ENCODE measurements at regions of chr14 and their contacts with region 1.

Region 1: DNA sequence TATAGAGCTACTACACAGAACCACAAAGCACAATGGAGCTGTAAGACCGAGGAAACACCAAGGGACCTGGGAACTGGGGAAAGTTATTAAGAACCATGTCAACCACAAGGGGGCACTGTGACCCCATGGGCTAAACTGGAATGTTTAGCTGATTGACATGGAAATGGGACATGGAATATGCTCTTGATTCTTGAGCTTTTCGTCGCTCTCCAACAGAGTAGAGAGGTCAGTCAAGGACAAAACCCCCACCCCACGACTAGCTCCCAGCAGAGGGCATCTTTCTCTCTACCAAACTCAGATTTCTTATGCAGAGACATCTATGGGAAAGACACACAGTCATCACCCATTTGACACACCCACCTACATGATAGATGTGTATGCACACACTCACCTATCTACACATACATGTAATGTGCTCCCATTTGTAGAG is 10.1 kb downstream of the NDRG2 start:
- DNase-seq: peak; percentile 23
- H3K4me3 ChIP-seq: no peak overlapping the region
- CTCF ChIP-seq: peak; percentile 82

Region 2: GRCh38 chr14:21024585-21025370 is 10.0 kb after region 1 on chr14 and contains the start of gene NDRG2:
- CTCF ChIA-PET with region 1: interaction called, 172 read pairs
- POLR2A ChIA-PET with region 1: interaction called, 3 read pairs
- DNase-seq: no peak
- H3K4me3 ChIP-seq: peak within 1 kb of the TSS; percentile 43
- CTCF ChIP-seq: no peak

Region 3: GRCh38 chr14:21049271-21049673 is 34.5 kb after region 1 on chr14:
- CTCF ChIA-PET with region 1: interaction called, 287 read pairs
- POLR2A ChIA-PET with region 1: no interaction called
- DNase-seq: no peak
- H3K4me3 ChIP-seq: no peak overlapping the region
- CTCF ChIP-seq: no peak

Region 4: DNA sequence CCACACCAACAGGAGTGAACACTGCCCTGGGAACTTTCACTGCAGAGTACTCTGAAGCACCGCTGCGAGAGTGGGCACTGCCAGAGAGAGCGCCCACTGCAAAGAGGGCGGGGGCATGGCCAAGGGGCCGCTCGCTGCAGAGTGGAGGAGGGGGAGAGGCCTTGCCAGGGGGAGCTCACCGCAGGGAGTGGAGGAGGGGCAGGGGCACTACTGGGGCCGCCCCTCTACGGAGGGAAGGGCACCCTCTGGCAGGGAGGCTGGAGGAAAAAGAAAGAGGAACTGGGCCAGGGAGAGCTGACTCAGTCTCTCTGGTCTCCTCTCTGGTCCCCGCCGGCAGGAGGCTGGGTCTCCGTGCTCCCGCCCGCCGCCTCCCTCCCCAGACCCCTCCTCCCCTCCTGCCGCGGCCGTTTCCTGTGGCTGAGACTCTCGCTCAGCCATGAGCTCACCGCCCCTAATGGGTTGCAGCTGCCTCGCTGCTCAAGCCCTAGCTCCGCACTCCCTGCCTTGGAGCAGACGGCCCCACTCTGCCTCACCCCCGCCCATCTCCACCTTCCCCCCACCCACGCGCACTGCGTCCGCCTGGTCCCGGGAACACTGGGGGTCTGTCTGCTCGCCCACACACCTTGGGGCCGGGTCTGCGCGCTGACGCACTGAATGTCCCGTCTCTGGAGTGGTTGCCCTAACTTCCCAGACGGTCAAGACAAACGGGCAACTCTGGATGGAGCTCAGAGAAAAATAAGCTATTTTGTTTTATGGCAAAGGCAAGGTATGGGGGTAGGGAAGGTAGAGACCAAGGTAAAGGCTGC is 56.7 kb after region 1 on chr14:
- CTCF ChIA-PET with region 1: interaction called, 137 read pairs
- POLR2A ChIA-PET with region 1: interaction called, 8 read pairs
- DNase-seq: no peak
- H3K4me3 ChIP-seq: peak overlapping the region; percentile 81
- CTCF ChIP-seq: no peak

Region 5: DNA sequence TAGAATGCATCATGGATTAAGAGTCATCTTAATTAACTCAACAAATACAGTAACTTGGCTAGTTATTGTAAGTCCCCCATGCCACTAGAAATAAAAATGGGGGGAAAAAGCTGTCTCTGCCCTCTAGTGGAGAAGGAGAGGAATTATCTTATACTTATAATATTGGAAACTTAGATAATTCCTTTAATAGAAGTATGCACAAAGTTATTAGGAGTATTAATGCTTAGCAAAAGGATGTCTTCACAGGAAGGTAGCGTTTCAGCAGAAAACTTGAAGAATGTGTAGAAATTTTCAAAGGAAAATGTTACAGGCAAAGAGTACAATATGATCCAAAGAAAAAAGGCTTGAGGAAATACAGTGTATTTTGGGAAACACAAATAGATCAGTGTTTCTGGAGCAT is 121.2 kb after region 1 on chr14:
- CTCF ChIA-PET with region 1: interaction called, 33 read pairs
- POLR2A ChIA-PET with region 1: no interaction called
- DNase-seq: no peak
- H3K4me3 ChIP-seq: no peak overlapping the region
- CTCF ChIP-seq: peak; percentile 24

Measured in AG04449 (cell line).